ENCODE measurements at regions of chr12 and their contacts with region 1.

Region 1: GRCh38 chr12:75390899-75391538 is at the start of gene GLIPR1L2:
- DNase-seq: peak; percentile 86
- ATAC-seq: peak; percentile 95
- H3K4me3 Mint-ChIP-seq: peak within 1 kb of the TSS; percentile 94
- H3K27ac Mint-ChIP-seq: peak within 1 kb of the TSS; percentile 97
- H3K4me1 Mint-ChIP-seq: peaks cover 38% of the 10 kb centered on the region
- H3K27me3 Mint-ChIP-seq: no peaks in the 10 kb centered on the region
- CTCF ChIP-seq: peak; percentile 68
- total RNA-seq, gene GLIPR1L2: 0.20 TPM in 1 of 2 replicates, not detected in the other

Region 2: DNA sequence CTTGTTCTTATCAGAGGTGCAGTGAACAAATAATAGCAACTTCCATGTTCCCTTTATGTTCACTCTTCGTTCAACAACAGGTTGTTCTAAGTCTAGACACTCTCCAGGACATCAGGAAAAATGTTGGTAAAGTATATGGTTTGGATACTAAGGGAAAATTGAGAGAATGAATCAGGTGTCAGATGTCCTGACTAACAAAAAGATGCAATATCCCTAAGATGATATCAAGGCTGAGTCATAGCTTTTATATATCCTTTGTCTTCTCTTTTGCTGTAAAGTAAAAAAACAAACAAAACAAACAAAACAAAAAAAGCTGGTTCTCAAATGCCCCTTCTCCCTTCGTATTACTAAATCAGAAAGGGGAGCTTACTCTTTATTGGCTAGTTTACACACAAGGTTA is 45.5 kb before region 1 on chr12:
- CTCF ChIA-PET with region 1: no interaction called
- POLR2A ChIA-PET with region 1: no interaction called
- intact Hi-C with region 1: no loop called
- DNase-seq: no peak
- ATAC-seq: no peak
- H3K4me3 Mint-ChIP-seq: no peak overlapping the region
- H3K27ac Mint-ChIP-seq: no peak overlapping the region
- H3K4me1 Mint-ChIP-seq: no peaks in the 10 kb centered on the region
- H3K27me3 Mint-ChIP-seq: no peaks in the 10 kb centered on the region
- CTCF ChIP-seq: no peak

Region 3: GRCh38 chr12:75404231-75404630 is 13.2 kb after region 1 on chr12:
- CTCF ChIA-PET with region 1: interaction called, 5 read pairs
- POLR2A ChIA-PET with region 1: interaction called, 10 read pairs
- intact Hi-C with region 1: no loop called
- DNase-seq: no peak
- ATAC-seq: no peak
- H3K4me3 Mint-ChIP-seq: no peak overlapping the region
- H3K27ac Mint-ChIP-seq: no peak overlapping the region
- H3K4me1 Mint-ChIP-seq: no peaks in the 10 kb centered on the region
- H3K27me3 Mint-ChIP-seq: no peaks in the 10 kb centered on the region
- CTCF ChIP-seq: no peak

Region 4: GRCh38 chr12:75480469-75480949 is 89.5 kb after region 1 on chr12 and contains the start of gene GLIPR1:
- CTCF ChIA-PET with region 1: interaction called, 32 read pairs
- POLR2A ChIA-PET with region 1: interaction called, 37 read pairs
- intact Hi-C with region 1: loop called (anchors 1 kb)
- DNase-seq: peak; percentile 40
- ATAC-seq: peak; percentile 79
- H3K4me3 Mint-ChIP-seq: peak within 1 kb of the TSS; percentile 96
- H3K27ac Mint-ChIP-seq: peak within 1 kb of the TSS; percentile 97
- H3K4me1 Mint-ChIP-seq: peaks cover 96% of the 10 kb centered on the region
- H3K27me3 Mint-ChIP-seq: no peaks in the 10 kb centered on the region
- CTCF ChIP-seq: no peak
- total RNA-seq, gene GLIPR1: 44.7 and 45.4 TPM in 2 replicates

Region 5: DNA sequence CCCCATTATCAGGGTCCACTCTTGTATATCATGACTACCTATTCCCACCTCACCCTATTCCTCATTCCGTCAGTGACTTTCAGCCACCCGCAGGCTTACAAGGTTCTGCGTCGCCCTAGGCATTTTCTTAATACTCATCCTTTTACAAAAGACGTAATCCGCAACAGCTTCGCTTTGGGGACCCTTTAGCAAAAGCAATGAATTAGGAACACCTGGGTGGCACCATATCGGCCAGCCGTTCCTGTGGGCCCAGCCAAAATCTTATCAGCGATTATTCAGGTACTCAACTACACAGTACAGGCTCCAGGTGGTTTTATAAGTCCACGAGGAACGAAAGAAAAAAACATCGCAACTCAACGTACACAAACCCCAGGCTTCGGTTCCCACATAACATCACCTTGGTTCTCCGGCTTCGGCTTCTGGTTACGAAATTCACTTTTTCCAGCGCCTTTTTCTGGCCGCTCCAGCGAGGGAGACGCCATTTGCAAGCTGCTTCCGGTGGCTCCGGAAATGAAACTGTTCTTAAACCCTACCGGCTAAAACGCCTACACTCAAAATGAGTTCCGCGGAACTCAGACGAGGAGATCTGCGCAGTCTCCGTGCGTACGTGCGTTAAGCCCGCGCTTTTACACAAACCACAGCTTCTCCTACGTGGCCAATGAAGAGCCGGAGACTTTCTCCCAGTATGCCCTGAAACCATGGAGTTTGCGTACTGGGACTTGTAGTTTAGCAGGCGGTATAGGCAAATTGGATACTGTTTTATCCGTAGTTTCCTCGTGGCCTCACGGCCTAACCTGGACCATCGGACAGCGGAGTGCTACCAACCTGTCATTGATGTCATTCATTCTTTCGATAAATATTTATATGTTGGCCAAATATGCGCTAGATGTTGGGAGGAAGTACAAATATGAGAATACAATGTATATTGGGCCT is 120.4 kb after region 1 on chr12 and contains the start of gene KRR1:
- CTCF ChIA-PET with region 1: interaction called, 3 read pairs
- POLR2A ChIA-PET with region 1: interaction called, 18 read pairs
- intact Hi-C with region 1: loop called (anchors 1 kb)
- DNase-seq: peak; percentile 72
- ATAC-seq: peak; percentile 96
- H3K4me3 Mint-ChIP-seq: peak within 1 kb of the TSS; percentile 99
- H3K27ac Mint-ChIP-seq: peak within 1 kb of the TSS; percentile 99
- H3K4me1 Mint-ChIP-seq: peaks cover 27% of the 10 kb centered on the region
- H3K27me3 Mint-ChIP-seq: no peaks in the 10 kb centered on the region
- CTCF ChIP-seq: no peak
- total RNA-seq, gene KRR1: 75.0 and 85.1 TPM in 2 replicates

Region 6: DNA sequence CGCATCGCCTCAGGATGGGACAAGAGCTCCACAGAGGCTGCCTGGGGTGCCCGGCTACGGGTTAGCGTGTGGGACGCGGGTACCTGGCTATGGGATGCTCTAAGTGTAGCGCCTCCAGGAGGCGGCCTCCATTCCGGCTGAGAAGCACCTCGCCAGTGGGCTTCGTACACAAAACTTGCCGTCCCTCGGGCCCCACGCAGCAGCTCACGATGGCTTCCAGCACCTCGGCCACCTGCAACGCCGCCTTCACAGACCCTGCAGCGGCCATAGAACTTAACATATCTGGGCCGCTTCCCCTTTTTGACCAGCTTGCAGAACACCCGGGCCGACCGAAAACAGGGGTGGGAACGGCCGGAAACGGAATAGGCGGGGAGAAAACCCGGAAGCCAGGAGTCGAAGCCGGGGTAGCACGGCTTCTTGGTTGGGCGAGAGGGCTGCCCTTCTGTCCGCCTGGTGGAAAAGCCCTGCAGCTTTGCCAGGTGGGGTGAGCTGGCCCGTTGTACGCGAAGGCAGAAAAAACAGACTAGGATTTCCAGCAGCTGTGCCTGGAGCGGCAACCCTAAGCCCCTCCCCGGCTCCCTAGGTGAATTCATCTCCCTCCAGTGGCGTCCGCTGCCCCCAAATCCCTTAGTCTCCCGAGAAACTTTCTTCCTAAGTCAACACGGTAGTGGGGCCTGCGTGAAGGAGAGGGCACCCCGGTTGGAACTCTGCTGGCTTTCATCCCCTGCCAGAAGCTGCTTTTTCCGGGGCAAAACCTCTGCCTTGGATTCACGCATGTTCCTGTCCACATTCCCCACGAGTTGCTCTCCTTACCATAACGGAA is 957.3 kb after region 1 on chr12 and contains the start of gene BBS10:
- CTCF ChIA-PET with region 1: no interaction called
- POLR2A ChIA-PET with region 1: interaction called, 11 read pairs
- intact Hi-C with region 1: loop called (anchors 1 kb)
- DNase-seq: peak; percentile 81
- ATAC-seq: peak; percentile 98
- H3K4me3 Mint-ChIP-seq: peak within 1 kb of the TSS; percentile 95
- H3K27ac Mint-ChIP-seq: peak within 1 kb of the TSS; percentile 93
- H3K4me1 Mint-ChIP-seq: peaks cover 35% of the 10 kb centered on the region
- H3K27me3 Mint-ChIP-seq: no peaks in the 10 kb centered on the region
- CTCF ChIP-seq: no peak
- total RNA-seq, gene BBS10: 7.9 and 8.0 TPM in 2 replicates

Region 7: DNA sequence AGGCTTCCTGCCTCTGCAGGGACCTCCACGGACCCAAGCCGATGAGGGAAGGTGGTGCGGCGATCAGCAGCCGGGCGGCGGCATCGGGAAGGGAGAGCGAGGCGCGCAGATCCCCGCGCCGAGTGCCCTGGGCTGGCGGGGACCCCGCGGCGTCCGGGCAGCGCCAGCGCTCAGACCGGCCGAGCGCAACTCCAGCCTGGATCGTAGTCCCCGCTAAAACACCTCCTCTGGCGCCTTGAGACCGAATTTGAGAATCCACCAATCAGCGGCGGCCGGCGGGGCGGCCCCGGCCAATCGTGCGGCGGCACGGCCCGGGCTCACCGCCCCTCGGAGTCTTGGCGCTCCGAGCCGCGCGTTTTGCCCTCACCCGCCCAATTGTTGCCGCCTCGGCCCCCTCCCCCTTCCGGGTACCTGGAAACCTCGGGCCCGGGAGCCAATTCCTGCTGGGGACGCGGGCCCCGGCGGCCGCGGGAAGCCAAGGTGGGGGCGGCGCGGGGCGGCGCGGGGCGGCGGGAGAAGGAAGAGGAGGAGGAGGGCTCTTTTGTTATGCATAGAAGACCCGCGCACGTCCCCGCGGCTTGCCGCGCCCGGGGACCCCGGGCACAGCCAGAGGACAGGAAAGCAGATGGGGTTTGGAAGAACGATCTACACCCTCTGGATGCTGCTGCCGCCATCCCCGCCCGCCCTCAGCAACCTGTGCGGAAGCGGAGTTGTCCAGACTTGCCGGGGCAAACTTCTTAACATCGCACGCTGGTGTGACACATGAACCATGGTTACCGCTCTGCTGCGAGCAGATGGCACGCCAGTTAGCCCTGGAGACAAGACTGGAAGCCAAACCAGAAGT is 1674.6 kb after region 1 on chr12 and contains the start of gene E2F7:
- CTCF ChIA-PET with region 1: no interaction called
- POLR2A ChIA-PET with region 1: no interaction called
- intact Hi-C with region 1: loop called (anchors 10 kb)
- DNase-seq: peak; percentile 81
- ATAC-seq: peak; percentile 86
- H3K4me3 Mint-ChIP-seq: peak within 1 kb of the TSS; percentile 90
- H3K27ac Mint-ChIP-seq: no peak within 1 kb of the TSS
- H3K4me1 Mint-ChIP-seq: peaks cover 36% of the 10 kb centered on the region
- H3K27me3 Mint-ChIP-seq: peaks cover 5% of the 10 kb centered on the region
- CTCF ChIP-seq: no peak
- total RNA-seq, gene E2F7: 0.71 and 0.95 TPM in 2 replicates